ENCODE measurements at regions of chr7 and their contacts with region 1.

Region 1: DNA sequence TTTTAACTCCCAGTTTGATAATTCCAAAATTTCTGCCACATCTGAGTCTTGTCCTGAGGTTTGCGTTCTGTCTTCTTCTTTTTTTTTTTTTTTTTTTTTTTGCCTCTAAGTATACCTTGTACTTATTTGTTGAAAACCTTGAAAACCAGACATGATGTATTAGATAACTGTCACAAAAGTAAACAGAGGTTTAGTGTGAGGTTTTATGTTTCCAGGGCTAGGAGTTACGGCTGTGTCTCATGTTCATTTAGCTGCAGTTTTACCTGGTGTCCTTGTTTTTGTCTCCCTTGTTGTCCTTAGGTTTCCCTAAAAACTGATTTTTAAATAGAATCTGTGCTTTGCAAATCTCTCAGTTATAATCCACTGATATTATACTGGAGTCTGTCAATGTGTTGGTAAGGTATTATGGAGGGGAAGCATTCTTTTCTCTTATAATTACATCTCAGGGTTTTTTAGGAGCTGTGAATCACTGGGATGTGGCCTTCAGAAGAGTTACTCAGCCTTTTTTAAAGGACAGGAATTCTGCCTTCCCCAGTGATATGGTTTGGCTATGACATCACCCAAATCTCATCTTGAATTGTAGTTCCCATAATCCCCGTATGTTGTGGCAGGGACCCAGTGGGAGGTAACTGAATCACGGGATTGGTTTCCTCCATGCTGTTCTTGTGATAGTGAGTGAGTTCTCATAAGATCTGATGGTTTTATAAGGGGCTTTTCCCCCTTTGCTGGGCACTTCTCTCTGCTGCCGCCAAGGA is 95.0 kb downstream of the CDCA7L start:
- DNase-seq: no peak
- H3K4me3 ChIP-seq: no peak overlapping the region
- H3K27ac ChIP-seq: no peak overlapping the region
- H3K4me1 ChIP-seq: peaks cover 5% of the 10 kb centered on the region
- CTCF ChIP-seq: no peak

Region 2: GRCh38 chr7:21867816-21868575 is 17.3 kb after region 1 on chr7:
- CTCF ChIA-PET with region 1: no interaction called
- POLR2A ChIA-PET with region 1: interaction called, 11 read pairs
- intact Hi-C with region 1: no loop called
- DNase-seq: no peak
- H3K4me3 ChIP-seq: no peak overlapping the region
- H3K27ac ChIP-seq: no peak overlapping the region
- H3K4me1 ChIP-seq: no peaks in the 10 kb centered on the region
- CTCF ChIP-seq: no peak